Activated CD4-positive, alpha-beta T cell treated with anti-CD3 and anti-CD28 coated beads, Interleukin-2, amount 10 ng/mL, durations not matched to agents 24 days and 14 days (primary cell): ENCODE measurements at regions of chr22 and their contacts with region 1.

Region 1: DNA sequence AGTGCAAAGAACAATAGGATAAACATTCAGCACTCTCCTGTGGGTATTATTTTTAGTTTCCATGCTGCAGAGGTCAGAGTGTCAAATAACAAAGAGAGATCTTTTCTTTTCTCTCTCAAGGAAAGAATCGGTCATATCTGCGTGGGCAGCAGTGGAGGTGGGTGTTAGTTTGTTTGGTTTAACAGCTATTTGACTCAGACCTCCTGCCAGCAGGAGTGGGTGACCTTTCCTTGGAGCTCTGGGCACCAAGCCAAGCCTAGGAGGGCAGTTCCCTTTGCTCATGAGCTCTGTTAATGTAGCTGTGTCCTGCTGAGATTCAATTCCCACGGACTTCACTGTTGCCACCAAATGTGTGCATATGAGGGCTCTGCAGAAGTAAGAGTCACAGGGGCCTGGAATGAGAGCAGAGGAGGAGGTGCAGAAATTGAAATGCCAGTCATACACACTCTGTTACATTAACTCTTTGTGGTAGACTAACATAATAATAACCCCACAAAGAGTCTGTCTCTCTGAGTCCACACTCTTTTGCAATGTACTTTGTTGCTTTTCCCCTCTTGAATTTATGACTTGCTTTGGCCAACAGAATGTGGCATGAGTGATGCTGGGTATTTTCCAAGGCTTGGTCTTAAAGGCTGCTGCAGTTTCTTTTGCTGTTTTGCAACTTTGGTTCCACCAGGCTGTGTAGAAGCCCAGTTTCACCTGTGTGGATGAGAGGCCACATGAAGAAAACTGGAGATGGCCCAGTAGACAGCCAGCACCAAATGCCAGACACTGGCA is 76.0 kb upstream of the GRK3 start:
- DNase-seq: peak; percentile 62
- H3K4me3 Mint-ChIP-seq: peak overlapping the region; percentile 65
- H3K27ac Mint-ChIP-seq: peak overlapping the region; percentile 89
- H3K4me1 Mint-ChIP-seq: peaks cover 57% of the 10 kb centered on the region
- H3K27me3 Mint-ChIP-seq: peaks cover 3% of the 10 kb centered on the region

Region 2: DNA sequence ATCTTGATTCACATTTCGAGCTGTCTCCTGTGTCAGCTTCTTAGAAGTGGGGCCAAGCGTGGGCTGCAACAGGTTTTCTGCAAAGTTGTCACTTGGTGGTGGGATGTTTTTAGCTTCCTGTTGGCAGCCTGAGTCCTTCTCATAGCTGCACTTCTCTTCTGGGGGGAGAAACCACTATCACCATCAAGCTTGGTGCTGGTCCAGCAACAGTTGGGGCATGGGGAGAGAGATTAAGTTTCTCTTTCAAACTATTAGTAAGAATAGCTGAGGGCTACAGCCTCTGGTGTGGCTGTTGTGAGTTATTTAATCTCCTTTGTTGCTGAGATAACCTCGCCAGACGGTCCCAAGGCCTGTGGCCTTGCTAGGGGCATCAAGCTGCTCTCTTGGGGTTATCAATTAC is 412.1 kb before region 1 on chr22:
- intact Hi-C with region 1: loop called (anchors 5 kb)
- DNase-seq: peak; percentile 74
- H3K4me3 Mint-ChIP-seq: peak overlapping the region; percentile 56
- H3K27ac Mint-ChIP-seq: peak overlapping the region; percentile 79
- H3K4me1 Mint-ChIP-seq: peaks cover 76% of the 10 kb centered on the region
- H3K27me3 Mint-ChIP-seq: no peaks in the 10 kb centered on the region

Region 3: GRCh38 chr22:25420925-25421904 is 67.2 kb before region 1 on chr22:
- intact Hi-C with region 1: no loop called
- DNase-seq: no peak
- H3K4me3 Mint-ChIP-seq: peak overlapping the region; percentile 76
- H3K27ac Mint-ChIP-seq: no peak overlapping the region
- H3K4me1 Mint-ChIP-seq: peaks cover 19% of the 10 kb centered on the region
- H3K27me3 Mint-ChIP-seq: peaks cover 73% of the 10 kb centered on the region

Region 4: DNA sequence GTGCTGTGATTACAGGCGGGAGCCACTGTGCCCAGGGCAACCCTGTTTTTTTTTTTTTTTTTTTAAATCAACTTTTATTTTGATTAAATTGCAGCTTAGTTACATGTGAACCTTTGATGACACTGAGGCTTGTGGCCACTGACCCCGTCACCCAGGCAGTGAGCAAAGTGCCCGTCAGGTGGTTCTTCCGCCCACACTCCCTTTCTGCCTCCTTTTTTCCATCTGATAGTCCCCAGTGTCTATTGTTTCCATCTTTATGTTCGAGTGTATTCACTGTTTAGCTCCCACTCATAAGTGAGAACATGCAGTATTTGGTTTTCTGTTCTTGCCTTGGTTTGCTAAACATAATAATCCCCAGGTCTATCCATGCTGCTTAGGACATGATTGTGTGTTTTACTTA is 34.9 kb before region 1 on chr22:
- intact Hi-C with region 1: loop called (anchors 1 kb)
- DNase-seq: no peak
- H3K4me3 Mint-ChIP-seq: no peak overlapping the region
- H3K27ac Mint-ChIP-seq: peak overlapping the region; percentile 61
- H3K4me1 Mint-ChIP-seq: peaks cover 46% of the 10 kb centered on the region
- H3K27me3 Mint-ChIP-seq: no peaks in the 10 kb centered on the region

Region 5: DNA sequence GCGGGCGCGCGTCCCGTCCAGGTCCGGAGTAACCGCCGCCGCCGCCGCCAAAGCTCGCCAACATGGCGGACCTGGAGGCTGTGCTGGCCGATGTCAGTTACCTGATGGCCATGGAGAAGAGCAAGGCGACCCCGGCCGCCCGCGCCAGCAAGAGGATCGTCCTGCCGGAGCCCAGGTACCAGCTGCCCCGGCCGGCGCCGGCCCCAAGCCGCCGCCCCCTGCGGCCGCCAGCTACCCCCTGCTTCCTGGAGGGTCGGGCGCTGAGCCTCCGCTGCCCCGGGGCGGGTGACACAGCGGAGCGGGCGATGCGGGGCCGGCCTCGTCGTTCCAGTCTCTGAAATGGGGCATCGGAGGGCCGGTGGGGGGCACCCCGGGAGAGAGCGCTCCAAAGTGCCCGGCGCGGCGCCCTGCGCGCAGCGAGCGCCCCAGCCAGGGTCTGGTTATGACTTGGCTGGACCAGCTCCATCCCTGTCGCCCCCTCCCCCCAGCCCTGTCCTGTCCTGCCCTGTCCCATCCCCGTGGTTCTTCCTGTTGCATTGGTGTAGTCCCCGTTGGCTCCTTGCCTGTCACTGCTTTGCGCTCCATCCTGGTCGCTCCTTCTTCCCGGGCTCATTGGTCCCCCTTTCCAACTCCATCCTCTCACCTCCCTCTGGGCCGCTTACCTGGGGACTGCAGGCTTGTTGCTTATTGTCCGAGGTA is 76.7 kb after region 1 on chr22:
- intact Hi-C with region 1: loop called (anchors 2 kb)
- DNase-seq: peak; percentile 79
- H3K4me3 Mint-ChIP-seq: peak overlapping the region; percentile 96
- H3K27ac Mint-ChIP-seq: peak overlapping the region; percentile 95
- H3K4me1 Mint-ChIP-seq: peaks cover 64% of the 10 kb centered on the region
- H3K27me3 Mint-ChIP-seq: no peaks in the 10 kb centered on the region

Region 6: DNA sequence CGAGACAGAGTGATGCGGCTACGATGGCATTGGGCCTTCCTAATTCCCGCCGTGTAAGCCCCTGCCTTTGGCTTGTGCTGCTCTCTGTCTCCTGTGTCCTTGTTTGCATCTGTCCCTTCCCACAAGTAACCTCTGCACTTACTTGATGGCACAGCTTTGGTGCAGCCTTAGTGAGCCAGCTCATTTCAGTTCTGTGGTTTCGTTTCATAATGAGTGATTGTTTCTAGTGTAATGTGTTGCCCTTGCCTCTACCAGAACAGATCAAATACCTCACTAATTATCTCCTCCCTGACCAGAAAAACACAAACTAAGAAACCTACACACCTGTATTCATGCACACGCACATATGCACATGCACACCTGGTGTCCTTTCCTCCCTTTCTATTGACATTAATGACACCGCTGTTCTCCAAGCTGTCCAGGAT is 134.9 kb after region 1 on chr22:
- intact Hi-C with region 1: loop called (anchors 2 kb)
- DNase-seq: peak; percentile 63
- H3K4me3 Mint-ChIP-seq: no peak overlapping the region
- H3K27ac Mint-ChIP-seq: peak overlapping the region; percentile 25
- H3K4me1 Mint-ChIP-seq: peaks cover 47% of the 10 kb centered on the region
- H3K27me3 Mint-ChIP-seq: no peaks in the 10 kb centered on the region

Region 7: DNA sequence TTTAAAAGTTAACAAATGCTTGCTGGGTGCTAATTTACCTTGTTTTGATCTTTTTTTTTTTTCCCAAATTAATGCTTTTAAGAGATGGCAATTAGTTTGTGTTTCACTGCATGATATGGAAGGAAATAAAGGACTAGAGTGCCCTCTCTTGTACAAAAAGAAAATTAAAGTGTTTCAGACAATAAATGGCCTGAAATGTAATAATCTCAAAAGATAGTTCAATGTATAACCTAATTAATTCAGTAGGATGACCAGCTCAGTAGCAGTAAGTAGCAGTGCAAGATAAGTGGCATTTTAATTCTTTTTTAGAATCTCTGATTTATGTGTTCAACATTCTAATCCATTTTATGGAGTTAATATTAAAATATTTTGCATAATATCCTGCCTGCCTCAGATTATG is 213.6 kb after region 1 on chr22:
- intact Hi-C with region 1: loop called (anchors 2 kb)
- DNase-seq: no peak
- H3K4me3 Mint-ChIP-seq: peak overlapping the region; percentile 69
- H3K27ac Mint-ChIP-seq: peak overlapping the region; percentile 61
- H3K4me1 Mint-ChIP-seq: peaks cover 47% of the 10 kb centered on the region
- H3K27me3 Mint-ChIP-seq: no peaks in the 10 kb centered on the region

Region 8: GRCh38 chr22:25736378-25737011 is 248.1 kb after region 1 on chr22:
- intact Hi-C with region 1: loop called (anchors 1 kb)
- DNase-seq: peak; percentile 92
- H3K4me3 Mint-ChIP-seq: peak overlapping the region; percentile 71
- H3K27ac Mint-ChIP-seq: peak overlapping the region; percentile 98
- H3K4me1 Mint-ChIP-seq: peaks cover 48% of the 10 kb centered on the region
- H3K27me3 Mint-ChIP-seq: no peaks in the 10 kb centered on the region